ENCODE measurements at regions of chr9 and their contacts with region 1.

Region 1: DNA sequence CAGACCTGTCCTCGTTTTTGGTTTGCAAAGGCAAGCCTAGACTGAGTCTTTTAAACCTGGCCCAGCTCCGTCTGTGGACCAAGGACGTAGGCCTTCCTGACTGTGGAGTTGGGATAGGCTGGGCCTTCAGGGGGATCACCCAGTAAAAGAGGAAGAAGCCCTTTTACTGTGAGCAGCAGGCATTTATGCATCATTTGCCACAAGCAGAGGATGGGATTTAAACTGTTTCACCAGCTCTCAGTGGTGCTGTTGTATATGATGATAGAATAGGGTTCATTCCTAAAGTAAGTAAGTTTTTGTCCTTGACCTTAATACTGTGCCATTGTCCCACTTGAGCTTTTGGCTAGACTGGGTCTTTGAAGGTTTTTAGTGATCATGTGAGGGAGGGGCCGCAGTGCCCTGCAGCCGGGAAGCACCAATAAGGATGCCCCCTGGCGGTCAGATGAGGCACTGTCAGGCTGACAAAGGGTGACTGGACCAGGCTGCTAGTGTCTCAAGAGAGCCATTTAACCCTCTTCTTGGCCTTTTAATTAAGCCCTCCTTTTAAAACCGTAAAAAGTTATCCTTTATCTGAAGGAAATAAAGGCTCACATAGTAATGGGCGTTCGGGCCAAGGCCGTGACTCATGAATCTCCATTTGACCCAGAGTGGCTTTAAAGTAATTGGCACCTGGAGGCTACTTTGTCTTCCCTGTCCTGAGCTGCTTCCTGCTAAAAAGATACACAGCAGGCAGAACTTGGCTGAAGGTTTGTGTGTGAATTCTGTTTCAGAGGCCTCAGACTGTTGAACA is 74.0 kb downstream of the UBAP1 start:
- DNase-seq: peak; percentile 76
- H3K4me3 ChIP-seq: no peak overlapping the region
- H3K27ac ChIP-seq: peak overlapping the region; percentile 6
- H3K4me1 ChIP-seq: no peaks in the 10 kb centered on the region
- H3K27me3 ChIP-seq: no peaks in the 10 kb centered on the region
- CTCF ChIP-seq: peak; percentile 80

Region 2: DNA sequence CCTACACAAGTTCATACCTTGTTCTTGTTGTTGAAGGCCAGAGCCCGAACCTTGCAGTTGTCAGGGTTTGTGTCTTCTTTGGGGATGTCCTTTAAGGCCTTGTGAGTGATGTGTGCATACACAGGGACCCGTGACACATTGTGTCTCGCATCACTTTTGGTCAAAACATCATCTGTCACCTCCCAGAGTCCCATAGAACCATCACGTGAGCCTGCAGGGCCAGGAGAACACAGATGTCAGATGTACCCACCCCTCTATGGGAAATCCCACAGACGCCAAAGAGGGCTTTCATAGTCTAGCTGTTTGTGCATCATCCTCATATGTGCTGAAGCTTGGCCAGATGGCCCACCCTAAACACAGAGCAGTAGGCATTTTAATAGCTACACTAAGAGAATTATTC is 154.6 kb before region 1 on chr9:
- intact Hi-C with region 1: loop called (anchors 10 kb)
- DNase-seq: no peak
- H3K4me3 ChIP-seq: no peak overlapping the region
- H3K27ac ChIP-seq: no peak overlapping the region
- H3K4me1 ChIP-seq: no peaks in the 10 kb centered on the region
- H3K27me3 ChIP-seq: no peaks in the 10 kb centered on the region
- CTCF ChIP-seq: no peak

Region 3: DNA sequence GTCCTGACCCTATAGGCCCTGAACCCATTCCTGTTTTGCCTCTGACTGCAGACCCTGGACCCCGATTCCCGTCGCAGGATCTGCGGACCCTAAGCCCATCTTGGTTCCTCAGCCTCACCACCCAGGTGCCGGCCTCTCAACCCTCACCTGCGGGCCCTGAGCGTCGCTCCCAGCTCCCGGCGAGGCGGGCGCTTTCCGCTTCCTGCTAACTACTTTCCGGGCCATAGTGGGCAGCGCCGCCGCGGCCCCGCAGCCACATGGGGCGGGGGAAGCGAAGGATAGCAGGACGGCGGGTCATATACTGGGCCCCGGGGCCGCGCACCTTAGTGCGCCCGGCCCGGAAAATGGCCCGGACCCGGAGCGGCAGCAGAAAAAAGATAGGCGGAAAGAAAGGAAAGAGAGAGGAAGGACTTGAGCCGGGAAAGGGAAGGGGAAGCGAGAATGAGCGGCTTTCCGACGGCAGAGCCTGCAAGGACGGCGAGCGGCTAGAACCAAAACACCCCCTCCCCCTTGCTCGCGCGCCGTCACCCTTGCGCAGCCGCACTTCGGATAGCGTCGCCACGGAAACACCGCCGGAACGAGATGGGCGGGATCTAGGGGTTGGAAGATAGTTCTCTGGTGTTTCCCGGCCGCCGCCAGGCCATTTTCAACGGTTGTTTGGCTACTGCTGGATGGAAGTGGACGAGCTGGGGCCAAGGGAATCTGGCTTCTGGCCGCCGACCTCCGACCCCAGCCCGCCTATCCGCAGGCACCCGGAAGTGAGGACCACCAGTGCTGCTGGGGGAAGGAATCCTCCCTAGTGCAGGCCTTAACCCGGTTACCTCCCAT is 126.4 kb before region 1 on chr9 and contains the start of gene DCAF12:
- intact Hi-C with region 1: loop called (anchors 2 kb)
- DNase-seq: peak; percentile 94
- H3K4me3 ChIP-seq: peak within 1 kb of the TSS; percentile 98
- H3K27ac ChIP-seq: peak within 1 kb of the TSS; percentile 95
- H3K4me1 ChIP-seq: peaks cover 10% of the 10 kb centered on the region
- H3K27me3 ChIP-seq: no peaks in the 10 kb centered on the region
- CTCF ChIP-seq: no peak
- total RNA-seq, gene DCAF12: 37.9 to 41.5 TPM

Region 4: DNA sequence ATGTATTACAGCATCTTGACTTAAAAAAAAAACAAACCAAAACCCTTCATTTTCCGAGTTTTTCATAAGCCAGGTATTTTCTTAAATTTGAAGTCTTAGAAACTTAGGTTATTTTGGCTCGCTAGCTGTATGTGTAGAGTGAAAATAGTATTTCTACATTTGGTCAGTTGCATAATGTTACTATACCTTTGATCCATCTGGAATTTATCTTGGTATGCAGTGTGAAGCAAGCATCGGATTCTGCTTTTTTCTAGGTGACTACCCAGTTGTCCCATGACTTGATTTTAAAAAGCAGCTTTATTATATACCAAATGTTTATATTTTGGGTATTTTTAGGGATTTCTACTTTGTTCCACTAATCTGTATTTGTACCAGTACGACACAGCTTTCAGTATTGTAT is 46.3 kb before region 1 on chr9:
- intact Hi-C with region 1: no loop called
- DNase-seq: no peak
- H3K4me3 ChIP-seq: no peak overlapping the region
- H3K27ac ChIP-seq: no peak overlapping the region
- H3K4me1 ChIP-seq: peaks cover 8% of the 10 kb centered on the region
- H3K27me3 ChIP-seq: no peaks in the 10 kb centered on the region
- CTCF ChIP-seq: no peak

Region 5: DNA sequence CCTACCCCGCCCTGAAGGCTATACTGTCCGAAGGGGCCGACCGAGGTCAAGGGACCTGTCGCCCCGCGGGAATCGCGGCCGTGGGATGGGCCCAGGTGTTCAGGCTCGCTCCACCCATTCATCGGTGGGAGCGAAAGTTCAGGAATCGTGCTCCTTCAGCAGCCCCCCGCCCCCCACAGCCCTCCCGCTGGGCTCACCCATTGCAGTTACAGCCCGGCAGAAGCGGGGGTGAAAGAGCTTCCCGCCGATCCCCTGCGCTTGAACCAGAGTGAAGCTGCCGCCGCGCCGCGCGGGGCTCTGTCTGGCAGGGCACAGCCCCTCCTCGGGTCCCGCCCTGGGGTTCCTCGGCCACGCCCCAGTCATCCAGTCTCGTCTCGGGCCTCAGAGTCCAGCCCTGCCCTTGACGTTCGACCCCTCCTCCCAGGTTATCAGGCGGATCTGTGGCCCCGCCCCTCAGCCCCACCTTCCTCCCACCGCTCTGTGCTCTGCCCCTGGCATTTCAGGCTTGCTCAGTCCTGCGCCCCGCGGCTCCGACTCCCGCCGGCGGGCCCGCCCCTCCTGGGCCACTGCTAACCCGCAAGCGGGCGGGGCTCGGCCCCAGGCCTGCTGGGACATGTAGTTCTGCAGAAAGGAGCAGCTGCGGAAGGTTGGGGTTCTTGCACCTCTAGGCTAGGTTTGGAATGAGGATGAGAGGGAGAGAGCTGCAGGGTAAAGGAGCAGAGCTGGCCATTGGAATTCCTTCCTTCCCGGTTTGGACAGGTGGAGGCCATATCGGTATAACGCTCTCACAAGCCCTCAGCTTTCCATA is 123.9 kb after region 1 on chr9 and contains the start of gene MYORG:
- intact Hi-C with region 1: loop called (anchors 5 kb)
- DNase-seq: peak; percentile 99
- H3K4me3 ChIP-seq: peak within 1 kb of the TSS; percentile 63
- H3K27ac ChIP-seq: peak within 1 kb of the TSS; percentile 94
- H3K4me1 ChIP-seq: peaks cover 8% of the 10 kb centered on the region
- H3K27me3 ChIP-seq: no peaks in the 10 kb centered on the region
- CTCF ChIP-seq: no peak
- total RNA-seq, gene MYORG: 57.0 to 68.6 TPM